ENCODE measurements at regions of chr14 and their contacts with region 1.

Region 1: GRCh38 chr14:96297000-96297399 is 41.0 kb downstream of the BDKRB1 start:
- DNase-seq: peak in 1 of 3 donors; percentile 11
- H3K4me3 ChIP-seq: no peak overlapping the region
- H3K4me3 Mint-ChIP-seq: no peak overlapping the region
- H3K27ac ChIP-seq: no peak overlapping the region
- H3K27ac Mint-ChIP-seq: no peak overlapping the region
- H3K4me1 ChIP-seq: no peaks in the 10 kb centered on the region
- H3K4me1 Mint-ChIP-seq: no peaks in the 10 kb centered on the region
- H3K27me3 ChIP-seq: no peaks in the 10 kb centered on the region
- H3K27me3 Mint-ChIP-seq: peaks cover 0 to 4% (median 0%) of the 10 kb centered on the region in 3 donors
- CTCF ChIP-seq: peak; percentile 69

Region 2: DNA sequence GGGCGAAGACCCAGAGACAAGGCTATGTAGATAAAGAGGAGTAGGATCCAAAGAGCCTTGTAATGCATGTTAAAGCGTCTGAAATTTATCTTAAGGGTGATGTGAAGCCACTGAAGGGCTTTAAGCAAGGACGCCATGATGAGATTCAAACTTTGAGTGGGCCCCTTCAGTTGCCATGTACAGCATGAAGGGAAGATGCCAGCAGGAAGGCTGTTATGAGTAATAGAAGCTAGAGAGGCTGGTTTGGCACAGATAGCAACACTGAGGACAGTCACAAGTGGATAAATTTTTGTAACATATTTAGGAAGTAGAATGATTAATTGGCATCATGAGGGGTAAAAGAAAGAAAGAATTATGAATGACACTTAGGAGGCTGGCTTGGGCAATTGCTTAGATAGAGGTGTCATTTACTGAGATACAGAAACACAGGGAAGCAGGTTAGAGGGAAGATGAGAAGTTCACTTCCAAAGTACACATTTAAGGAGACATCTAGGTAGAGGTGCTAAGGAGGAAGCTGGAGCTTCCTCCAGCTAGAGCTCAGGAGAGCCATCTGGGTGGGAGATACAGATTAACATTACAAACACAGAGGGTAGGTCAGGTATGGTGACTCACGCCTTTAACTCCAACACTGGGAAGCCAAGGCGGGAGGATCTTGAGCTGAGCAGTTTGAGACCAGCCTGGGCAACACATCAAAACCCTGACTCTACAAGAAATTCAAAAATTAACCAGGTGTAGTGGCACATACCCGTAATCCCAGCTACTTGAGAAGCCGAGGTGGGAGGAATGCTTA is 52.5 kb after region 1 on chr14:
- intact Hi-C with region 1: no loop called
- DNase-seq: no peak
- H3K4me3 ChIP-seq: no peak overlapping the region
- H3K4me3 Mint-ChIP-seq: no peak overlapping the region
- H3K27ac ChIP-seq: no peak overlapping the region
- H3K27ac Mint-ChIP-seq: no peak overlapping the region
- H3K4me1 ChIP-seq: no peaks in the 10 kb centered on the region
- H3K4me1 Mint-ChIP-seq: no peaks in the 10 kb centered on the region
- H3K27me3 ChIP-seq: no peaks in the 10 kb centered on the region
- H3K27me3 Mint-ChIP-seq: no peaks in the 10 kb centered on the region
- CTCF ChIP-seq: no peak

Region 3: GRCh38 chr14:96413526-96413925 is 116.5 kb after region 1 on chr14:
- intact Hi-C with region 1: no loop called
- DNase-seq: no peak
- H3K4me3 ChIP-seq: no peak overlapping the region
- H3K4me3 Mint-ChIP-seq: no peak overlapping the region
- H3K27ac ChIP-seq: no peak overlapping the region
- H3K27ac Mint-ChIP-seq: no peak overlapping the region
- H3K4me1 ChIP-seq: no peaks in the 10 kb centered on the region
- H3K4me1 Mint-ChIP-seq: no peaks in the 10 kb centered on the region
- H3K27me3 ChIP-seq: no peaks in the 10 kb centered on the region
- H3K27me3 Mint-ChIP-seq: peaks cover 0 to 5% (median 1%) of the 10 kb centered on the region in 3 donors
- CTCF ChIP-seq: no peak

Region 4: DNA sequence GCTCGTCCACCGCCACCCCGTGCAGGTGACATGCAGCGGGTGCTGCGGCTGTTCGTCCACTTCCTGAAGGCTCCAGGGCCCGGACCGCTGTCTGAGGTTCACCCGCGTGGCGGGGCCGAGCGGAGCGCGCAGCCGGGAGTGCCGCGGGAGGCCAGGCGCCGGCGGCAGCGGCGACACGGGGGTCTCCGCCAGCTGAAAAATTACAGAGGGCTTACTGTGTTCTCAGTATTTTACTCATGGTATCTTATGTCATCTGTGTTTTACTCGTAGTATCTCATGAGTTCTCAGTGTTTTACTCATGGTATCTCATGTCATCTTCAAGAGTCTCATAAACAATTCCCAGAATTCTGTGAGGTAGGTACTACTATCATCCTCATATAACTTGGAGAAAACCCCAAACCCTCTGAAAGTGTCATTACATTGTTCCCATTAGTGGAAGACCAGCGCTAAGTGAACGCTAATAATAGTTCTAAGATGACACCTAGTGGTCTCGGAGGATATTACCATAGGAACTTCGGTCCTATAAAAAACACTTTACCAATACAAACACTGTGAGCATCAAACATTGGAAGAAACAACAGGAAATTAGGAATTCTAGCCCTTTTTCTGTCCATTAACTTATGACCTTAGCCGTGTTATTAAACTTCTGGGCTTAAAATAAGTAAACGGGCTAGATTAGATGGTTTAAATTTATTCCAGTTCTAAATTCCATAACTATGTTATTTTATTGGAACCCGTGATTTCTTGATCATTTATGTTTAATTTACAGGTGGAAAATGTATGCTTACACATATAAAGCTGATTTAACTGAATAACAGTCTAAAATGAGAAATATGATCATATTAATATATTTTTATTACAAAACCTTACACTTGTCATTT is 127.3 kb after region 1 on chr14:
- intact Hi-C with region 1: loop called (anchors 1 to 2 kb)
- DNase-seq: peak; percentile 36 to 84 (median 56)
- H3K4me3 ChIP-seq: peak overlapping the region; percentile 31 to 70 (median 43)
- H3K4me3 Mint-ChIP-seq: peak overlapping the region; percentile 68 to 92
- H3K27ac ChIP-seq: no peak overlapping the region
- H3K27ac Mint-ChIP-seq: peak overlapping the region in 1 of 7 donors; percentile 50
- H3K4me1 ChIP-seq: peaks cover 10 to 17% of the 10 kb centered on the region in 2 donors
- H3K4me1 Mint-ChIP-seq: peaks cover 19% of the 10 kb centered on the region
- H3K27me3 ChIP-seq: no peaks in the 10 kb centered on the region
- H3K27me3 Mint-ChIP-seq: peaks cover 0 to 11% (median 8%) of the 10 kb centered on the region in 3 donors
- CTCF ChIP-seq: peak; percentile 84

Measured in CD14-positive monocyte (primary cell).